Activated CD4-positive, alpha-beta T cell treated with anti-CD3 and anti-CD28 coated beads, Interleukin-2, amount 10 ng/mL, durations not matched to agents 7 days and 5 days (primary cell): ENCODE measurements at regions of chr10 and their contacts with region 1.

Region 1: GRCh38 chr10:103772096-103772845 is 83.1 kb downstream of the SH3PXD2A start:
- DNase-seq: peak; percentile 66
- H3K4me3 Mint-ChIP-seq: peak overlapping the region; percentile 78
- H3K27ac Mint-ChIP-seq: peak overlapping the region; percentile 89
- H3K4me1 Mint-ChIP-seq: peaks cover 43% of the 10 kb centered on the region
- H3K27me3 Mint-ChIP-seq: peaks cover 10% of the 10 kb centered on the region

Region 2: DNA sequence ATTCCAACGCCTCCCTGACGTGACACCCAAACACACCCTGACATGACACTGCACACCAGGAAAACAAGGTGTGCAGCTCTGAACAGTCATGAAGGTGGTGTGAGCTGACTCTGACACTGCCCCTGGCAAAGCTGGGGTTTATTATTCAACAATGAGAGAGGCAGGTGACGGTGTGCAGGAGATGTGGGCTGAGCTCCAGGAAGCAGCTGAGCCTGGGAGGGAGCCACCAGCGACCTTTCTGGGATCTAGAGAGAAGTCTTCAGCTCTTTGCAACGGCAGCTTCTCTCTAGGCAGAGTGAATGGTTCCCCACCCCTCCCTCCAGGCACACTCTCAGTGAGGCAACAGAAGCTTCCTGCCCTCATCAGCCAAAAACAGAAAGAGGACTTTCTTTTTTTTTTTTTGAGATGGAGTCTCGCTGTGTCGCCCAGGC is 17.5 kb after region 1 on chr10:
- CTCF ChIA-PET with region 1: interaction called, 10 read pairs
- POLR2A ChIA-PET with region 1: no interaction called
- DNase-seq: no peak
- H3K4me3 Mint-ChIP-seq: no peak overlapping the region
- H3K27ac Mint-ChIP-seq: no peak overlapping the region
- H3K4me1 Mint-ChIP-seq: peaks cover 11% of the 10 kb centered on the region
- H3K27me3 Mint-ChIP-seq: peaks cover 7% of the 10 kb centered on the region

Region 3: DNA sequence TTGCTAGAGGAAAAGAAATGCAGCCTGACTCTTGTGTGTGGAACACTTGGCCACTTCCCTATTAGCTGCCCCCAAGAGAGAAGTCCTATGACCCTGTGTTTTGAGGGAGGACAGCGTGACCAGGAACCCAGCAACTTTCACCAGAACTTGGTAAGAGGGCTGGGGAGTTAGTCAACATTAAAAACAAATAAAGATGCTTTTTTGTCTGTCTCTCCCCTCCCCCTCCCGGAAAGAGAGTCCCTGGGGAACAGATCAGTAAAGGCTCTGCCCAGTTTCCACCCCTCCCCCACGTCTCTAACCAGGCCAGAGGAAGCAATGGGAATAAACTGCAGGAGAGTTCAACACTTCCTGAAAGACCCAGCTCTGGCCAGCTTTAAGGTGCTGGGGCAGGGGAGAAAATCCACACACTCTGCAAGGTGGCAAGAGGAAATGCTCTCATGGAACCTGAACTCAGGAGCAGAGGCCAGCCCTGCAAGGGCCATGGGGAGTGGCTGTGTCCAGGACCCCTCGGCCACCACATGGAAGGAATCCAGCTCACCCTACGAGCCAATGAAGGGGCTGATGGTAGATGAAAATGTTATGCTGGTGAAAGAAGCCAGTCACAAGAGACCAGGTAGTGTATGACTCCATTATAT is 61.6 kb after region 1 on chr10:
- CTCF ChIA-PET with region 1: no interaction called
- POLR2A ChIA-PET with region 1: no interaction called
- DNase-seq: no peak
- H3K4me3 Mint-ChIP-seq: no peak overlapping the region
- H3K27ac Mint-ChIP-seq: no peak overlapping the region
- H3K4me1 Mint-ChIP-seq: no peaks in the 10 kb centered on the region
- H3K27me3 Mint-ChIP-seq: peaks cover 20% of the 10 kb centered on the region